Activated CD4-positive, alpha-beta memory T cell treated with anti-CD3 and anti-CD28 coated beads, Interleukin-2, amount 10 ng/mL, durations not matched to agents 7 days and 5 days (primary cell): ENCODE measurements at regions of chr14 and their contacts with region 1.

Region 1: GRCh38 chr14:22955702-22956569 is 954 bp downstream of the HAUS4 start:
- DNase-seq: no peak
- H3K4me3 Mint-ChIP-seq: peak overlapping the region; percentile 91
- H3K27ac Mint-ChIP-seq: peak overlapping the region; percentile 79
- H3K4me1 Mint-ChIP-seq: peaks cover 30% of the 10 kb centered on the region
- H3K27me3 Mint-ChIP-seq: peaks cover 3% of the 10 kb centered on the region

Region 2: DNA sequence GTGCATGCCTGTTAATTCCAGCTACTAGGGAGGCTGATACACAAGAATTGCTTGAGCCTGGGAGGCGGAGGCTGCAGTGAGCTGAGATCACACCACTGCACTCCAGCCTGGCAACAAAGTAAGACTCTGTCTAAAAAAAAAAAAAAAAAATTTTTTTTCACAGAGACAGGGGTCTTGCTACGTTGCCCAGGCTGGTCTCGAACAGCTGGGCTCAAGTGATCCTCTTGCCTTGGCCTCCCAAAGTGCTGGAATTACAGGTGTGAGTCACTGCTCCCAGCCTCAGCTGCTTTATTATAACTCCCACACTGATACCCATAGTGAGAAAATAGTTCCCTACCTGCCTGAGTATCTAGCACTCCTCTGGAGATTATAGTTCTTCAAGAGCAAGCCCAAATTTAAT is 10.3 kb before region 1 on chr14:
- CTCF ChIA-PET with region 1: interaction called, 6 read pairs
- POLR2A ChIA-PET with region 1: interaction called, 23 read pairs
- DNase-seq: no peak
- H3K4me3 Mint-ChIP-seq: no peak overlapping the region
- H3K27ac Mint-ChIP-seq: no peak overlapping the region
- H3K4me1 Mint-ChIP-seq: no peaks in the 10 kb centered on the region
- H3K27me3 Mint-ChIP-seq: no peaks in the 10 kb centered on the region

Region 3: DNA sequence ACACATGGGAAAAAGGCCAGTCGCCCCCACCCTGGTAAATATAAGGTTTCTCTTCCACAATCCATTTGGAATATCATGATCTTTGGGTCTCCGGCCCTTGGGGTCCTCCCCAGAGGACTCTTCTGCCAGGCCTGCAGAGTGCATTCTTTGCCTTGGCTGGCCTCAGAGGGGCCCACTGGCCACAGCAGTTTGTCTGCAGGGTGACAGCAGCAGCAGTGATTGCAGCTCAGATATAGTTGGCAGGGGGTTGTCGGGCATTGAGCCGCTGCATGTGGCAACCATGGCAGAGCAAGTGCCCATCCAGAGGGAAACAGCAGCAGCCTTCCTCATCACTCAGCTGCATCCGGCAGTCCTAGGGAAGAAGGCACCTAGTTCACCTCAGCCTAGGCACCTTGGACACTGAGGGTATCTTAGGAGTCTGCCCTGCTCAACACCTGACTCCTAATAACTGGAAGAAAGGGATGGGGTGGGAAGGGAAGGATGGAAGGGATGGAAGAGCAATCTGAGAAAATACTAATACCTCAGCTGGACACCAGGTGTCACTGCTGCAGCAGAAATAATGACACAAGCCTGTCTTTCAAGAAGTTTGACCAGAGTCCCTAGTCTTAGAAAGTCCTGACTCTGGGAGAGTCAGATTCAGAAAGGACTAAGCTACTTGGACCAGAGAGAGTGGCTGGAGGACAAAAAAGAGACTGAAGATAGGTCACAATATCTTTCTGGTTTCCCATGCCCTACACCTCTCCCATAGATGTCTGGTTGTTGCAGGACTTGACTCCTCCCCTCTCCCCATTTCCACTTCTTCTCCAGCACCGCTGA is 17.5 kb after region 1 on chr14:
- CTCF ChIA-PET with region 1: interaction called, 17 read pairs
- POLR2A ChIA-PET with region 1: interaction called, 7 read pairs
- DNase-seq: peak; percentile 43
- H3K4me3 Mint-ChIP-seq: no peak overlapping the region
- H3K27ac Mint-ChIP-seq: no peak overlapping the region
- H3K4me1 Mint-ChIP-seq: no peaks in the 10 kb centered on the region
- H3K27me3 Mint-ChIP-seq: peaks cover 13% of the 10 kb centered on the region